OCI-LY7 (cell line): ENCODE measurements at regions of chr16 and their contacts with region 1.

Region 1: DNA sequence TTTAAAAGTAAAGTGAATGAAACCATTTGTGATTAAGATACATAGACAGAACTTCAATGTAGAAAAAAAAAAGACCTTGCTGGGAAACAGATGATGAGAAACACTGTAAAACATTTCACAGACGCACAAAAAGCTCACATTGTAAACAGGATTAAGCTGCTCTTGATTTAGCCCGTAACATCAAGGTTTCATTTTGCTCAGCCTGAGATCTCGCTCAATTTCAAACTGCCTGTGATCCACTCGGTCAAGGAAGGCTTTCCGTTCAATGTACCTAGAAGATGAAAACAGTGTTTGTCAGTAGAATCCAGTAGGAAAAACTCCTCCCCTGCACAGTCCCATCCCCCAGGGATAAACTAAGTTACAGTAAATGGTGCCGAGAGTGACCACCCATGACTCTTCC is 42.3 kb upstream of the BCAR1 start:
- DNase-seq: no peak
- H3K4me3 ChIP-seq: no peak overlapping the region
- H3K27ac ChIP-seq: no peak overlapping the region
- H3K4me1 ChIP-seq: peaks cover 4% of the 10 kb centered on the region
- CTCF ChIP-seq: no peak

Region 2: GRCh38 chr16:75181630-75182029 is 112.1 kb before region 1 on chr16:
- CTCF ChIA-PET with region 1: no interaction called
- POLR2A ChIA-PET with region 1: no interaction called
- intact Hi-C with region 1: no loop called
- DNase-seq: peak; percentile 9
- H3K4me3 ChIP-seq: no peak overlapping the region
- H3K27ac ChIP-seq: no peak overlapping the region
- H3K4me1 ChIP-seq: no peaks in the 10 kb centered on the region
- CTCF ChIP-seq: no peak

Region 3: DNA sequence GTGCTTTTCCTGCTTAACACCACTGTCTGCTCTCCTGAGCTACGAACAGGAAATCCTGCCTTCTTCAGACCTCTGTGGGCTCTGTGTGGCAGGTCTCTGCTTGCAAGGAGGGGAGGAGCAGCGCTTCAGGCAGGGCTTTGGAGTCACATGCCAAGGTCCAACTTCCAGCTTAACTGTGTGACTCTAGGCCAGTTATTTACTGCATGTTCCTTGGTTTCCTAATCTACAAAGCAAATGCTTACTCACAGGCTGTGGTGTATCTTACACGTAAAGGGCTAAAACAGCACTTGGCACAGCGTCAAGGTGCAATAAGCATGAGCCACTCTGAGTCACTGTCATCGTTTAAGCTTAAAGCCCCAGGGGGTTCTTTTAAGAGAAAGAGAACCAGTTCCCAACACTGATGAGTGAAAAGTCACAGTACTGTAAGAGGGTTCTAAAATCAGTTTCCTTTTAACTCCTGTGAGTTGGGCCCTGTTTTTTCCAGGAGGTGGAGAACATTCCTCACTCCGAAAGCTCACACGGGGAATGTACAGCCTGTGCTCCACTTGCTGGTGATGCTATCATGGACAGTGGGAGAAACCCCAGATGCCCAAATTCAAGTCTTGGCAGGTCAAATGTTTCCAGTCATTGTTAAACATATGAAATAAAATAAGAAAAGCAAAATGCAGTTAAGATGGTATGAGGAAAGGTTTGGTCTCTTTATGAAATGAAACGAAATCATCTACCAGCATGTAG is 11.8 kb after region 1 on chr16:
- CTCF ChIA-PET with region 1: no interaction called
- POLR2A ChIA-PET with region 1: no interaction called
- intact Hi-C with region 1: loop called (anchors 2 kb)
- DNase-seq: no peak
- H3K4me3 ChIP-seq: no peak overlapping the region
- H3K27ac ChIP-seq: no peak overlapping the region
- H3K4me1 ChIP-seq: no peaks in the 10 kb centered on the region
- CTCF ChIP-seq: no peak